Esophagus muscularis mucosa (tissue), 4 donors: ENCODE measurements at regions of chr6 and their contacts with region 1.

Region 1: GRCh38 chr6:168895102-168895812 is 358.4 kb downstream of the THBS2 start:
- DNase-seq: no peak
- H3K4me3 ChIP-seq: peak overlapping the region; percentile 14 to 44 (median 28)
- H3K27ac ChIP-seq: no peak overlapping the region
- H3K4me1 ChIP-seq: peaks cover 3 to 34% (median 32%) of the 10 kb centered on the region in 4 donors
- H3K27me3 ChIP-seq: no peaks in the 10 kb centered on the region
- CTCF ChIP-seq: peak in 2 of 3 experiments; percentile 91 to 93
- EP300 ChIP-seq: no peak
- POLR2A ChIP-seq: no peak

Region 2: GRCh38 chr6:169520104-169520503 is 624.8 kb after region 1 on chr6:
- intact Hi-C with region 1: loop called (anchors 2 kb)
- DNase-seq: no peak
- H3K4me3 ChIP-seq: no peak overlapping the region
- H3K27ac ChIP-seq: no peak overlapping the region
- H3K4me1 ChIP-seq: peaks cover 0 to 6% (median 0%) of the 10 kb centered on the region in 4 donors
- H3K27me3 ChIP-seq: no peaks in the 10 kb centered on the region
- CTCF ChIP-seq: peak; percentile 29 to 46 (median 33)
- EP300 ChIP-seq: no peak
- POLR2A ChIP-seq: no peak